ENCODE measurements at regions of chr7 and their contacts with region 1.

Region 1: GRCh38 chr7:45917658-45918057 is 3.4 kb downstream of the IGFBP3 start:
- DNase-seq: peak; percentile 90
- H3K4me3 ChIP-seq: peak overlapping the region; percentile 99
- H3K27ac ChIP-seq: peak overlapping the region; percentile 75
- H3K4me1 ChIP-seq: peaks cover 15% of the 10 kb centered on the region
- H3K27me3 ChIP-seq: no peaks in the 10 kb centered on the region

Region 2: GRCh38 chr7:46745707-46746090 is 828.0 kb after region 1 on chr7:
- in situ Hi-C with region 1: loop called (anchors 25 kb)
- DNase-seq: peak; percentile 36
- H3K4me3 ChIP-seq: no peak overlapping the region
- H3K27ac ChIP-seq: no peak overlapping the region
- H3K4me1 ChIP-seq: peaks cover 25% of the 10 kb centered on the region
- H3K27me3 ChIP-seq: no peaks in the 10 kb centered on the region

Region 3: GRCh38 chr7:47179812-47180515 is 1262.3 kb after region 1 on chr7:
- in situ Hi-C with region 1: loop called (anchors 25 kb)
- DNase-seq: peak; percentile 81
- H3K4me3 ChIP-seq: no peak overlapping the region
- H3K27ac ChIP-seq: no peak overlapping the region
- H3K4me1 ChIP-seq: peaks cover 10% of the 10 kb centered on the region
- H3K27me3 ChIP-seq: no peaks in the 10 kb centered on the region